B cell (primary cell): ENCODE measurements at regions of chr19 and their contacts with region 1.

Region 1: DNA sequence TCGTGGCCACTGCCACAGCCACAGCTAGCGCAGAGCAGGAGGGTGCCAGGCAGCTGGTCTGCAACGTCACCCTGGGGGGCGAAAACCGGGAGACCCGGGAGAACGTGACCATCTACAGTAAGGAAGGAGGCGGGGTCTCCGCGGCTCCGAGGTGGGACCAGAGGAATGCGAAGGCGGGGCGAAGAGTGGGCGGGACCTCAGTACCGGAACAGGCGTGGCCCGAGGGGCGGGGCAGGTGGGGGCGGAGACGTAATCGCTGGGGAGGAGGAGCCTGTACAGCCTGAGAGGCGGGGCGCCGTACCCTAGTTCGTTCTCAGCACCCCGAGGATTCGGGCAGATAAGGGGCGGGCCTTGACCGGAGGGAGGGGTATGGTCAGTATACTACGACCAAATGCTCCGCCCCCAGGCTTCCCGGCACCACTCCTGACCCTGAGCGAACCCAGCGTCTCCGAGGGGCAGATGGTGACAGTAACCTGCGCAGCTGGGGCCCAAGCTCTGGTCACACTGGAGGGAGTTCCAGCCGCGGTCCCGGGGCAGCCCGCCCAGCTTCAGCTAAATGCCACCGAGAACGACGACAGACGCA is 2.5 kb downstream of the ICAM5 start:
- DNase-seq: no peak
- ATAC-seq: peak; percentile 28
- H3K4me3 ChIP-seq: peak overlapping the region in 4 of 5 experiments; percentile 13 to 63 (median 40)
- H3K4me3 Mint-ChIP-seq: peak overlapping the region; percentile 87
- H3K27ac ChIP-seq: no peak overlapping the region
- H3K27ac Mint-ChIP-seq: peak overlapping the region; percentile 26
- H3K4me1 ChIP-seq: peaks cover 86 to 89% of the 10 kb centered on the region in 2 donors
- H3K4me1 Mint-ChIP-seq: peaks cover 70% of the 10 kb centered on the region
- H3K27me3 ChIP-seq: peaks cover 0 to 90% (median 61%) of the 10 kb centered on the region in 4 experiments
- H3K27me3 Mint-ChIP-seq: peaks cover 45% of the 10 kb centered on the region
- CTCF ChIP-seq: no peak

Region 2: GRCh38 chr19:10279737-10280442 is 12.4 kb before region 1 on chr19:
- CTCF ChIA-PET with region 1: interaction called, 116 read pairs
- POLR2A ChIA-PET with region 1: interaction called, 10 read pairs
- intact Hi-C with region 1: no loop called
- DNase-seq: peak; percentile 24
- ATAC-seq: no peak
- H3K4me3 ChIP-seq: no peak overlapping the region
- H3K4me3 Mint-ChIP-seq: no peak overlapping the region
- H3K27ac ChIP-seq: no peak overlapping the region
- H3K27ac Mint-ChIP-seq: peak overlapping the region; percentile 73
- H3K4me1 ChIP-seq: peaks cover 4 to 5% of the 10 kb centered on the region in 2 donors
- H3K4me1 Mint-ChIP-seq: peaks cover 9% of the 10 kb centered on the region
- H3K27me3 ChIP-seq: no peaks in the 10 kb centered on the region
- H3K27me3 Mint-ChIP-seq: no peaks in the 10 kb centered on the region
- CTCF ChIP-seq: no peak